ENCODE measurements at regions of chrX and their contacts with region 1.

Region 1: DNA sequence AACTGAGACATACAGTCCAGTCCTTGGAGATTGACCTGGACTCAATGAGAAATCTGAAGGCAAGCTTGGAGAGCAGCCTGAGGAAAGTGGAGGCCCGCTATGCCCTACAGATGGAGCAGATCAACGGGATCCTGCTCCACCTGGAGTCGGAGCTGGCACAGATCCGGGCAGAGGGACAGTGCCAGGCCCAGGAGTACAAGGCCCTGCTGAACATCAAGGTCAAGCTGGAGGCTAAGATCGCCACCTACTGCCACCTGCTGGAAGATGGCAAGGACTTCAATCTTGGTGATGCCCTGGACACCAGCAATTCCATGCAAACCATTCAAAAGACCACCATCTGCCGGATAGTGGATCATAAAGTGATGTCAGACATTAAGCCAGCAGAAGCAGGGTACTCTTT is 20.4 kb upstream of the FRMPD3 start:
- DNase-seq: no peak
- H3K4me3 Mint-ChIP-seq: no peak overlapping the region
- H3K27ac Mint-ChIP-seq: no peak overlapping the region
- H3K4me1 Mint-ChIP-seq: no peaks in the 10 kb centered on the region
- H3K27me3 Mint-ChIP-seq: peaks cover 2% of the 10 kb centered on the region

Region 2: GRCh38 chrX:106894392-106894909 is 534.6 kb before region 1 on chrX:
- intact Hi-C with region 1: loop called (anchors 1 kb)
- DNase-seq: peak; percentile 18
- H3K4me3 Mint-ChIP-seq: no peak overlapping the region
- H3K27ac Mint-ChIP-seq: no peak overlapping the region
- H3K4me1 Mint-ChIP-seq: no peaks in the 10 kb centered on the region
- H3K27me3 Mint-ChIP-seq: no peaks in the 10 kb centered on the region

Region 3: GRCh38 chrX:107025545-107025944 is 403.5 kb before region 1 on chrX:
- intact Hi-C with region 1: loop called (anchors 2 kb)
- DNase-seq: no peak
- H3K4me3 Mint-ChIP-seq: no peak overlapping the region
- H3K27ac Mint-ChIP-seq: no peak overlapping the region
- H3K4me1 Mint-ChIP-seq: no peaks in the 10 kb centered on the region
- H3K27me3 Mint-ChIP-seq: no peaks in the 10 kb centered on the region